ENCODE measurements at regions of chr9 and their contacts with region 1.

Region 1: GRCh38 chr9:131334629-131335367 is 45.3 kb downstream of the PLPP7 start:
- DNase-seq: no peak
- H3K4me3 Mint-ChIP-seq: no peak overlapping the region
- H3K27ac Mint-ChIP-seq: no peak overlapping the region
- H3K4me1 Mint-ChIP-seq: no peaks in the 10 kb centered on the region
- H3K27me3 Mint-ChIP-seq: no peaks in the 10 kb centered on the region

Region 2: DNA sequence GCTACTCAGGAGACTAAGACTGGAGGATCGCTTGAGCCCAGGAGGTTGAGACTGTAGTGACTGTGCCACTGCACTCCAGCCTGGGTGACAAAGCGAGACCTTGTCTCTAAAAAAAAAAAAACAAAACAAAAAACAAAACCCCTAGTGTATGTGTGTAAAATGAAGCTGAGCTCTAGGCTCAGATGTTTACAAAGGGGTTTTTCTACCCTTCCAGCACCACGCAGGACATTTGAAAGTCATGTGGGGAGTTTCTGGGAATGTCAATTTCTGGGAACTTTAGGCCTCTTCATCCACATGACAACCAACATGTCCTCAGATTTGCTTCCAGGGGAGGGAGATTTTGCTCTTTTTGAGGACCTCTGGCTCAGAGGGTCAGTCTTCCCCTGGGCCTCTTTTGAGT is 280.9 kb before region 1 on chr9:
- CTCF ChIA-PET with region 1: interaction called, 37 read pairs
- POLR2A ChIA-PET with region 1: no interaction called
- intact Hi-C with region 1: loop called (anchors 1 kb)
- DNase-seq: no peak
- H3K4me3 Mint-ChIP-seq: no peak overlapping the region
- H3K27ac Mint-ChIP-seq: no peak overlapping the region
- H3K4me1 Mint-ChIP-seq: no peaks in the 10 kb centered on the region
- H3K27me3 Mint-ChIP-seq: peaks cover 1% of the 10 kb centered on the region

Region 3: DNA sequence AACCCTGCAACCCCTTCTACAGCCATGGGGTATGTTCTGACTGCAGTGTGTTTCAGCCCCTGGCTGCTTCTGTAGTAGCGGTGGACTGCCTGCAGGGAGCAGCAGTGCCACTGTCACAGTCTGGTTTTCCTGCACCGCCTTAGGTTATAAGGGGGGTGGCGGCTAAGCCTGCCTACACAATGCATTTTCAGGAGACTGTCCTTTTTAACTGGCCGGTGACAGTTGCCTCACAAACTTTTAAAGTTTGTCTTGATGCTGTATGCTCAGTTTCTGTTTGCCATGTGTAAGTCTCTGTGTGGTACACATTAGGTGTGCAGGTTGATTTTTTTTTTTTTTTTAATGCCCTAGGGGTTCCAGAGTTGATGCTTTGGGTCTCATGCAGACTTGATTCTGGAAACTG is 156.4 kb before region 1 on chr9:
- CTCF ChIA-PET with region 1: interaction called, 198 read pairs
- POLR2A ChIA-PET with region 1: no interaction called
- intact Hi-C with region 1: loop called (anchors 1 kb)
- DNase-seq: peak; percentile 84
- H3K4me3 Mint-ChIP-seq: no peak overlapping the region
- H3K27ac Mint-ChIP-seq: no peak overlapping the region
- H3K4me1 Mint-ChIP-seq: peaks cover 5% of the 10 kb centered on the region
- H3K27me3 Mint-ChIP-seq: no peaks in the 10 kb centered on the region

Region 4: GRCh38 chr9:131253891-131254491 is 80.8 kb before region 1 on chr9:
- CTCF ChIA-PET with region 1: interaction called, 10 read pairs
- POLR2A ChIA-PET with region 1: no interaction called
- intact Hi-C with region 1: no loop called
- DNase-seq: no peak
- H3K4me3 Mint-ChIP-seq: peak overlapping the region; percentile 43
- H3K27ac Mint-ChIP-seq: peak overlapping the region; percentile 88
- H3K4me1 Mint-ChIP-seq: peaks cover 37% of the 10 kb centered on the region
- H3K27me3 Mint-ChIP-seq: no peaks in the 10 kb centered on the region

Region 5: DNA sequence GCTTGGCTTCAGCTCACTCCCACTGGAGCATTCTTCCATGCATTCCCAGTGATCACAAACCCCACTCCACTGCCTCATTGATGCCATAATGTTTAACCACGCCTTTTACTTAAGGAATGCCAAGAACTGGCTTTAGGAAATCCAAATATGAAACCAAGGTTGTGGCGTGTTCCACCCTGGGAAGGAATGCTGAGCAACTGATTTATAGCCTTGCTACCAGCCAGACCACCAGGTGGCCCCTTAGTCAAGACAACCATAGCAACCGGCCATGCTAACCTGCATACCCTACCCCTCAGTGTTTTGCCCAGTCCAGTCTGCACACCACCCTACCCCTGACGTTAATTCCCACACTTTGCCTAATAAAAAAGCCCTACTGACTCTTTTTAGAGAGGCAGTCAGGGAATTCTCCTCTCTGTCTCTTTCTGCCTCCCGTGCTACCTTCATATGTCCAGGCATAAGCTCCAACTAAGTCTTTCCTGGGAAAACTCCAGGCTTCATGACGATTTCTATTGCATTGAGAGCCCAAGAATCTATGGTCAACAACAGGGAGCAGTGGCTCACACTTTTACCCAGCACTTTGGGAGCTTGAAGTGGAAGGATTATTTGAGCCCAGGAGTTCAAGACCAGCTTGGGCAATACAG is 32.1 kb after region 1 on chr9:
- CTCF ChIA-PET with region 1: interaction called, 12 read pairs
- POLR2A ChIA-PET with region 1: no interaction called
- intact Hi-C with region 1: no loop called
- DNase-seq: no peak
- H3K4me3 Mint-ChIP-seq: no peak overlapping the region
- H3K27ac Mint-ChIP-seq: no peak overlapping the region
- H3K4me1 Mint-ChIP-seq: peaks cover 1% of the 10 kb centered on the region
- H3K27me3 Mint-ChIP-seq: no peaks in the 10 kb centered on the region

Region 6: DNA sequence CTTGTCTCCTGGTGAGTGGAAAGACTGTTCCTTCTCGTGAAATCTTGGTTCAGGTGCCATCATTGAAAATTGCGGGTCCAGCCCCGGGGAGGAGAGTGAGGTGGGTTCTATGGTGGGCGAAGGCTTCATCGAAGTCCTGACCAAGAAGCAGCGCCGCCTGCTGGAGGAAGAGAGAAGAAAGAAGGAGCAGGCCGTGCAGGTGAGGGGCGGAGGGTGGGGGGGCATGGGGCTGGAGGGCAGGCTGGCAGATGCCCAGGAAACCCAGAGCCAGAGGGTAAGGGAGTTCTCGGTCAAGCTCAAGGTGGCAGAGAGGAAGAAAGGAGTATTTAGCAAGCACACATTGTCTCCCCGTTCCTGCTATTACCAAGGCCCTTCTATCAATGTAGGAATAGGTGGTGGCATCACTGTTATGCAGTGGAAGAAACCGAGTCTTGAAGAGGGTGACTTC is 143.6 kb after region 1 on chr9:
- CTCF ChIA-PET with region 1: no interaction called
- POLR2A ChIA-PET with region 1: no interaction called
- intact Hi-C with region 1: no loop called
- DNase-seq: peak; percentile 69
- H3K4me3 Mint-ChIP-seq: no peak overlapping the region
- H3K27ac Mint-ChIP-seq: no peak overlapping the region
- H3K4me1 Mint-ChIP-seq: peaks cover 11% of the 10 kb centered on the region
- H3K27me3 Mint-ChIP-seq: no peaks in the 10 kb centered on the region